ENCODE measurements at regions of chr14 and their contacts with region 1.

Region 1: DNA sequence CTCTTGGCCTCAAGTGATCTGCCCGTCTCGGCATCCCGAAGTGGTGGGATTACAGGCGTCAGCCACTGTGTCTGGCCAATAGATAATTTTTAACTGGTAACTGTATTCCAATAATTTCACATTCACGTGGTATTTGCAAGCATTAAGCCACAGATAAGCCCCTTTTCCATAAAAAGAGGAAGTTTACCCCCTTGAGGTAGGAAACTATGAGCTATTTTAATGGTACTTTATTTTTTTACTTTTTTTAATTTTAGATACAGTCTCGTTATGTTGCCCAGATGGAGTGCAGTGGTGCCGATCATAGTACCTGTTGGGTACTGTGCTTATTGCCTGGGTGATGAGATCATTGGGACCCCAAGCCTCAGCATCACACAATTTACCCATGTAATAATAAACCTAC is 42.9 kb upstream of the AP4S1 start:
- DNase-seq: no peak
- H3K4me3 Mint-ChIP-seq: no peak overlapping the region
- H3K27ac Mint-ChIP-seq: no peak overlapping the region
- H3K4me1 Mint-ChIP-seq: peaks cover 17% of the 10 kb centered on the region
- H3K27me3 Mint-ChIP-seq: no peaks in the 10 kb centered on the region
- CTCF ChIP-seq: no peak

Region 2: DNA sequence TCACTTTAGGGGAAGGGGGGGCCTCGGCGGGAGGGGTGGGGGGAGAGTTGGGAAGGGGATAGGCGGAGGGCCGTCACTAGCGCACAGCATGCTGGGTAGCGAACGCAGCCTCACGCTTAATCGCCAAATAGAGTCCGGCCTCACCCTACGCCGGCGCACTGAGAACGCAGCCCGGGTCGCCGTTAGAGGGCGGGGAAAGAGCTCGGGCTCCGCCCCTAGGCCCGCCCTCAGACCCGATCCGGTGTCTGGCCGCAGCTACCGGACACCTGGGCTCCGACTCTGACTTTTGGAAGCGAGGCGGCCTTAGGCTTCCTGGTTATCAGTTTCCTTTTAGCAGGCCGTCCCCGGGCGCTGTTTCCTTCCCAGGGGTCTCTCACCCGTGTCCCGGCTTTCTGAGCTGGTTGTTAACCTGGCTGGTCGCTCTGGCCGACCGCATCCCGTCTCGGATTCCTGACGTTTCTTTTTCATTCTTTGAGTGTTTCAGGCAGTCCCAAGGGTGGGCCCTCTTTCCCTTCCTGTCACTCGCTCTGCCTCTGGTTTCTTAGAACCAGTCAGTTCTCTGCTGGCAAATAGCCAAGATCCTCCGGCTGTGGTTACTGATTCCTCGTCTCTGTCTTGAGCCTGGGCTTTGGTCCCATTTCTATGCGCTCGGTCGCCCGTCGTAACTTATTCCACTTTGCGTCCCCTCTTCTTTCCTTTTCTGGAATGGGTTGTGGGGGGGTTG is 44.0 kb after region 1 on chr14:
- CTCF ChIA-PET with region 1: interaction called, 5 read pairs
- intact Hi-C with region 1: loop called (anchors 5 kb)
- DNase-seq: peak; percentile 97
- H3K4me3 Mint-ChIP-seq: peak overlapping the region; percentile 94
- H3K27ac Mint-ChIP-seq: peak overlapping the region; percentile 99
- H3K4me1 Mint-ChIP-seq: peaks cover 30% of the 10 kb centered on the region
- H3K27me3 Mint-ChIP-seq: no peaks in the 10 kb centered on the region
- CTCF ChIP-seq: no peak

Region 3: GRCh38 chr14:31059152-31059924 is 76.8 kb after region 1 on chr14:
- CTCF ChIA-PET with region 1: no interaction called
- intact Hi-C with region 1: no loop called
- DNase-seq: peak; percentile 57
- H3K4me3 Mint-ChIP-seq: no peak overlapping the region
- H3K27ac Mint-ChIP-seq: peak overlapping the region; percentile 95
- H3K4me1 Mint-ChIP-seq: peaks cover 28% of the 10 kb centered on the region
- H3K27me3 Mint-ChIP-seq: no peaks in the 10 kb centered on the region
- CTCF ChIP-seq: no peak

Measured in Calu3 (cell line).